CD8-positive, alpha-beta T cell (primary cell): ENCODE measurements at regions of chr10 and their contacts with region 1.

Region 1: DNA sequence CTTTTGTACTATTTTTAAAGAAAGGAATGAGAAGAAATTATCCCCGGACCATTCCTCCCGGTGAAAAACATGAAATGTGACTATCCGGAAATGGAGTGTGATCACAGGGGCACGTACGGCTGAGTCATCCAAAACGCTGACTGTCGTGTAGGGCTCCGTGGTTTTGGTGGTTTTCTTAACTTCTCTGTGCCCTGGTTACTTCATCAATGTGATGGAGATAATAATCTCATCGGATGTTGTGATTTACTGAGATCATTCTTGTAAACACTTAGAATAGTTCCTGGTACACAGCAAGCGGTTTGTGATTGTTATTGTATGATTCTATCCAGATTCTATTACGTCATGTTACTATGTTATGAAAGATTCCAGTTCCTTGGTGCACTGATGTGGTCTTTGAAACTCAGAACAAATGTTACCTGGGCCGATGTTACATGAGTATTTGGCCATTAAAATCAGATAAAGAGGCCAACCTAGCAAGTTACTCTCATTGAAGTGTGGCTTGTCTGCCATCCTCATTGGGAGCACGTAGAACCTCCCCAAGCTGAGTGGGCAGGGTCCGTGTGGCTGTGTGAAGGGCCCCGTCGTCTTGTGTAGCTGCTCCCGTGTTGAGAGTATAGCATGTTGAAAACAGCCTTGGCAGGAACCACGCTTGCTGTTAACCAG is 99.5 kb downstream of the CAMK1D start:
- DNase-seq: peak; percentile 38 to 96 (median 75)
- ATAC-seq: peak; percentile 87
- H3K4me3 ChIP-seq: peak overlapping the region in 1 of 2 experiments; percentile 7
- H3K4me3 Mint-ChIP-seq: peak overlapping the region; percentile 38
- H3K27ac ChIP-seq: peak overlapping the region; percentile 43 to 66
- H3K27ac Mint-ChIP-seq: peak overlapping the region; percentile 86
- H3K4me1 ChIP-seq: peaks cover 18% of the 10 kb centered on the region
- H3K4me1 Mint-ChIP-seq: peaks cover 51% of the 10 kb centered on the region
- H3K27me3 ChIP-seq: no peaks in the 10 kb centered on the region
- H3K27me3 Mint-ChIP-seq: no peaks in the 10 kb centered on the region
- CTCF ChIP-seq: no peak

Region 2: GRCh38 chr10:12369982-12370381 is 78.9 kb before region 1 on chr10:
- CTCF ChIA-PET with region 1: no interaction called
- POLR2A ChIA-PET with region 1: interaction called, 3 read pairs
- intact Hi-C with region 1: loop called in 1 of 2 experiments (anchors 5 kb)
- DNase-seq: no peak
- ATAC-seq: no peak
- H3K4me3 ChIP-seq: no peak overlapping the region
- H3K4me3 Mint-ChIP-seq: no peak overlapping the region
- H3K27ac ChIP-seq: no peak overlapping the region
- H3K27ac Mint-ChIP-seq: no peak overlapping the region
- H3K4me1 ChIP-seq: peaks cover 7% of the 10 kb centered on the region
- H3K4me1 Mint-ChIP-seq: peaks cover 23% of the 10 kb centered on the region
- H3K27me3 ChIP-seq: no peaks in the 10 kb centered on the region
- H3K27me3 Mint-ChIP-seq: no peaks in the 10 kb centered on the region
- CTCF ChIP-seq: no peak

Region 3: GRCh38 chr10:12419262-12419847 is 29.5 kb before region 1 on chr10:
- CTCF ChIA-PET with region 1: no interaction called
- POLR2A ChIA-PET with region 1: no interaction called
- intact Hi-C with region 1: loop called in 1 of 2 experiments (anchors 2 kb)
- DNase-seq: peak in 7 of 9 experiments; percentile 18 to 60 (median 49)
- ATAC-seq: peak; percentile 70
- H3K4me3 ChIP-seq: no peak overlapping the region
- H3K4me3 Mint-ChIP-seq: no peak overlapping the region
- H3K27ac ChIP-seq: no peak overlapping the region
- H3K27ac Mint-ChIP-seq: no peak overlapping the region
- H3K4me1 ChIP-seq: peaks cover 7% of the 10 kb centered on the region
- H3K4me1 Mint-ChIP-seq: peaks cover 31% of the 10 kb centered on the region
- H3K27me3 ChIP-seq: no peaks in the 10 kb centered on the region
- H3K27me3 Mint-ChIP-seq: no peaks in the 10 kb centered on the region
- CTCF ChIP-seq: no peak

Region 4: DNA sequence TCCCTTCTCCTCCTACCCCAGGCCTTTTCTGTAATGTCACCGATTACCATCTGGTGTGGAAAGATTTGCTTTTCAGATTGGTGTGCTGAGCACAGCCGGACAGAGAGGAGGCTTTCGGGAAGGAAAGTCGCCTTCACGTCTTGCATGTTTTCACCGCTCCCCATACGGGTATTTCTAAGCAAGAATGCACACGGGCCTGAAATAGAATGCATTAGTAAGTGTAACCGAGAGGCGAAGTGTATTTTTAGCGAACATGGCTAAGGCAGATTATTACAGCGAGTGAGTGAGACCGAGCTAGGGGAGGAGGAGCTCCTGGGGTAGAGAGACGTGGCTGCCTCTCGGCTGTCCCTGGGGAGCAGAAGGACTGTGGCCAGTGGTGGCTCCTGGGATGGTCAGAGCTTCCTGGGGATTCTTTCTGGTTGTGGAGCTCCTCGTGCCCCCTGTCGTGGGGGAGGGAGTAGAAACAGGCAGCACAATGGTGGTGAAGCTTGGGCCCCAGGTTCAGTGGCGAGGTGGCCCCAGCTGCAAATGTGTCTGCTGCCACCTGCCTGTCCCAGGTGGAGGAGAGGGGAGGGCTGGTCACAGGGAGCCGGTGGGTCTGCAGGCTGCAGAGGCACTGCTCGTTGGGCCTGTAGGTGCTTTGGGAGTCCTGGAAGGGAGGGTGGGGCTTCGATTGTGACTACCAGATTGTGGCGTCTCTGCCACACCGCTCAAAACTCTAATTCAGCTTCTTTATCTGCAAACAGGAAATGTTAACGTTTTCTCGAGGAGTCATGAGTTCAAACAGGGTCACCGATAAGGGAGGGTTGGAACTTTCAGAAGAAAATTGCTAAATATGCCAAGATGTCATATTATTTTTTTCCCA is 36.3 kb after region 1 on chr10:
- CTCF ChIA-PET with region 1: interaction called, 3 read pairs
- POLR2A ChIA-PET with region 1: no interaction called
- intact Hi-C with region 1: loop called in 1 of 2 experiments (anchors 2 kb)
- DNase-seq: peak in 6 of 9 experiments; percentile 26 to 62 (median 44)
- ATAC-seq: peak; percentile 66
- H3K4me3 ChIP-seq: no peak overlapping the region
- H3K4me3 Mint-ChIP-seq: peak overlapping the region; percentile 60
- H3K27ac ChIP-seq: no peak overlapping the region
- H3K27ac Mint-ChIP-seq: peak overlapping the region; percentile 80
- H3K4me1 ChIP-seq: peaks cover 7% of the 10 kb centered on the region
- H3K4me1 Mint-ChIP-seq: peaks cover 37% of the 10 kb centered on the region
- H3K27me3 ChIP-seq: no peaks in the 10 kb centered on the region
- H3K27me3 Mint-ChIP-seq: no peaks in the 10 kb centered on the region
- CTCF ChIP-seq: no peak